Right ventricle myocardium inferior (tissue), 1 donor: ENCODE measurements at regions of chr15 and their contacts with region 1.

Region 1: DNA sequence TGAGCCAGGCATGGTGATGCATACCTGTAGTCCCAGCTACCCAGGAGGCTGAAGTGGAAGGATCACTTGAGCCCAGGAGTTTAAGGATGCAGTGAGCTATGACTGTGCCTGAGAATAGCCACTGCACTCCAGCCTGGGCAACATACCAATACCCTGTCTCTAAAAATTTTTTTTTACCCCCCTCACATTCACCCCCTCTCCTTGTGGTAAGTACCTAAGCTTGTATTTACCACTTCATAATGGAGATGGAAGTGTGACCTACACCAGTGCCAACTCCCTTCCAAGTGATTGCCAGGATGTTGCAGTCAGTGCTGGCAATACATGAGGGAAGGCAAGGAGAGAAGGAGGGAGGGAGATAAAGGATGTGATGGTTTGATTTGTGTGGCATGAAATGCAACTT is 84.2 kb downstream of the LRRC28 start:
- DNase-seq: no peak
- ATAC-seq: peak; percentile 85

Region 2: GRCh38 chr15:99090011-99090699 is 245.4 kb before region 1 on chr15:
- intact Hi-C with region 1: no loop called
- DNase-seq: no peak
- ATAC-seq: no peak

Region 3: GRCh38 chr15:99291643-99292042 is 43.9 kb before region 1 on chr15:
- intact Hi-C with region 1: no loop called
- DNase-seq: no peak
- ATAC-seq: no peak

Region 4: DNA sequence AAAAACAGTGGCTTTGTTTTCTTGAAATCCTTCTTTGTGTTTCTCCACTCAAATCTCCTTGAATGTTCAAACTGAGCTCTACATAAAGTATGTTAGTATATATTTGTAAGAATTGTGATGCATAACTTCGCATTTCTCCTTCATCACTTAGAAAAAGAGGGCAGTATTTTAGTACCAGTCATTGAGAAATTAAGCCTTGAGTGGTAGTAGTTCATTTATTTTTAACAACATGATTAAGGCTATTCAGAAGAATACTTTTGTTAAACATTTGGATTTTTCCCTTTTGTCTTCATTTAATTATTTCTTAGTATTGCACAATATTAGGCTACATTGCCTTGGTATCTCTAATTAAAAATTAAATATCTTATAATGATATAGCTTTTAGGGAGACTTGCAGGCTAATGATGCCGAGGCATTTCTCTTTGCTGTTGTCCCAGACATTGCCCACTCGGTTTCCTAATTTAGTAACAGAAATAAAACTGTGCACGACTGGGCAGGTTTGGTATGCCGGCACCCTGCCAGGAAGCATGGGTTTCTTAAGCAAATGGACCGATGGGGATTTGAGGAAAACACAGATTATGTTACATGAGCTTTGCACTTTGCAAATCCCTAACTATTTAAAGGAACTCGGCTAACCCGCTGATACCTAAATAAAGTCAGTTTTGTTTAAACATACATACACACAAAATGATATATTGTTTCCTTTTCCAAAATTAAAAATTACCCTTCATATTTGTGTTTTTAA is 29.6 kb before region 1 on chr15:
- intact Hi-C with region 1: loop called (anchors 5 kb)
- DNase-seq: no peak
- ATAC-seq: no peak